Head of caudate nucleus (tissue), 42 donors: ENCODE measurements at regions of chr10 and their contacts with region 1.

Region 1: GRCh38 chr10:44864637-44865288 is 46.4 kb upstream of the TMEM72 start:
- DNase-seq: peak; percentile 89 to 99 (median 96)

Region 2: DNA sequence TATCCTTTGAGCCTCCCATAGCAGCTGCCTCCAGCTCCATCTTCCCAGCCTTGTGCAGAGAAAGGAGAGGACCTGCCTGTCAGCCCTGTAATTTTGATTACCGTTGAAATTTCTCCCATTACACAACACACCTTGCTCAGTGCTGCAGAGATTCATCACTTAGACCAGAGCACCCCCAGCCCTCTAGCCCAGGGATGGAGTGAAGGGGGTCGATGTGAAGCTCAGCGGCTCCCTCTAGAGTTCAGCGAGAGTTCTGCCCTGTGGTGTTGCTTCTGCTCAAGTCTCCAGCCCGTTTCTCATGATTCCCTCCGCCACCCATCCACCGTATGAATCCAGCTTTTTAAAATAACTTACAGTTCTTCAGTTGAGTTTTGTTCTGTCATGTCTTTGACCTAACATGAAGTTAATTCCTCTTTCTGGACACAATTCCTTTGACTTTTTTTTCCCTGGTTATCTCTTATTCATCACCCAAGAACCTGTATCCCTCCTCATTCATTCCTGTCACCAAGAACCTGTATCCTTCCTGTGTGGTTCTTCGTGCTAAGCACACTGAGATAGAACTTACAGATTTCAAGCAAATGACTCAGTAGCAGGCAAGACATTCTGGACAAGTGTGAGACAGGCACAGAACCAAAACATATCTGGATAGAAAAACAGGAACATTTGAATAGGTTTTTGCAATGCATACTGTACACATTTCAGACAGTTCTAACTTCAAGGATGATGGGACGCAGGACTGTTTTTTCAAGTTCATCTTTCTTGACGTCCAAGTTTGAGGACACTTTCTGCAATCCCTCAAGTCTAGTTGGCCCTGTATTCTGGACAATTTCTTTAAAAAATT is 1181.1 kb before region 1 on chr10:
- intact Hi-C with region 1: loop called (anchors 5 kb)
- DNase-seq: no peak

Region 3: DNA sequence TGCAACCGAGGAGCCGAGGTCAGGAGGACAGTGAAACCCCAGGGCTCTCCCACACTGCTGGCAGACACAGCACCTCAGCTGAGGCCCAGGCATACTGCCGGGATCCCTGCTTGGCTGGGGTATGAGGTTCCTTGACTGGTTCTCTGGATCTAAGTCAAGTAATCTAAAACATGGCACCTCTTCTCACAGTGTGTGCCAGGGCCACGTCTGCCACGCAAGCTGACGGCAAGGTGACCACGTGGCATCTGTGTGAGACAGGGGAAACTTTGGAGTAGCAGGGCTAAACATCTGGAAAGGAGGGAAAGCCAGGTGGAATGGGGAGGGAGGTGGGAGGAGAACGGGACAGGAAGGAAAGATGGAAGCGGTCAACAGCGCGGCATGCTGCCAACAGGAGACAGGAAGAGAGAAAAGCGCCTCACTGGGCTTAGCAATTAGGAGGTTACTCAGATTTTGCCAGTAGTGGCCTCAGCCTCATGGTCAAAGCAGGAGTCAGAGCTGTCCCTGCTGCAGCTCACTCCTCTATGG is 583.6 kb before region 1 on chr10:
- intact Hi-C with region 1: loop called (anchors 10 kb)
- DNase-seq: no peak

Region 4: DNA sequence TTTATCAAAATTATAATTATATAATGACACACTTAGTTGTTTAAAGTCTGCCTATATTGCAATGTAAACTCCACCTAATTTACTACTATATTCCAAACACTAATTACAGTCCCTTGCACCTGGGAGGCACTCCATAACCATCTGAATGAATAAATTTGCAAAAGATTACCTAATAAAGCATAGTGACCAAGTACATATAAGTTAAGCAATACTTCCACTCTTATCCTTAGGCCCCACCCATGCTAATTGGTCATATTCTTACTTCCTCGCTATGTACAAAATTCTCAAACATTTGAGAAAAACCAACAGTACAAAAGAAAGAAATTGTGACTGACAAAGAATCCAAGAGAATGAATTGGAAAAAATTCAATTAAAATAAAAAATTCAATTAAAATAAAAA is 742.5 kb after region 1 on chr10:
- intact Hi-C with region 1: no loop called
- DNase-seq: no peak